Activated CD4-positive, alpha-beta memory T cell treated with anti-CD3 and anti-CD28 coated beads for 36 hours (primary cell): ENCODE measurements at regions of chr11 and their contacts with region 1.

Region 1: DNA sequence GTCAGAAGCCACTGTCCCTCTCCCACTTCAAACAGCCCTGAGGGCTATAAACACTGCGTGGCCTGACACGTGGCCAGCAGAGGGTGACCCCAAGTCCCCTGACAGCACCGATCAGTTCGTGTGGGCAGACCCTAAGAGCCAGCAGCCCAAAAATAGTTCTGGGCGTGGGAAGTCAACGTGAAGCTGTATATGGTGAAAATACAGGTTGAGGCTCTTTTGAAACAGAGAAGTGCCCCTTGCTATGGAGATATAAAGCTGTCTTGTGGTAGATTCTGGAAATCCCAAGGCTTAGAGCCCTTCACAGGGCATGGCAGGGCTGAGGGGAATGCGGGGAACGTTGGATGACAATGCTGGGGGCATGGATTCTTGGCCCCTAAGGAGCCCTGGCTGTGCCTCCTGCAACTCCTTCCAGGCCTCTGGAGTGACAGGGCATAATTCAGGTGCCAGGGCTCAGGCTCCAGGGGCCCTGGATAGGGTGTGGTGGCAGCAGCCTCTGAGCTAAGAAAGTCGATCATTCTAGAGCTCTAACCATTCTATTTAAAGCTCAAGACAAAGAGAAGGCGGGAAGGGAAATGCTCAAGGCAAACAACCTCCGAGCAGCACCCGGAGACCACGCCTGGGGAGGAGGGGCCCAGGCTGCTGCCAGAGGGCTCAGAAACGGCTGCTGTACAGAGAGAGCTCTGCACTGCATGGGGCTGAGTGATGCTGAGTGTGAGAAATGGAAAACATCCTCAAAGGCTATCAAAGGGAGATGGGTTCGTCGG is 60.4 kb upstream of the CD5 start:
- DNase-seq: peak; percentile 92
- H3K4me3 Mint-ChIP-seq: peak overlapping the region; percentile 68
- H3K27ac Mint-ChIP-seq: peak overlapping the region; percentile 96
- H3K4me1 Mint-ChIP-seq: peaks cover 71% of the 10 kb centered on the region
- H3K27me3 Mint-ChIP-seq: no peaks in the 10 kb centered on the region

Region 2: GRCh38 chr11:60970369-60970774 is 71.6 kb before region 1 on chr11:
- CTCF ChIA-PET with region 1: interaction called, 12 read pairs
- POLR2A ChIA-PET with region 1: no interaction called
- intact Hi-C with region 1: loop called (anchors 2 kb)
- DNase-seq: peak; percentile 89
- H3K4me3 Mint-ChIP-seq: peak overlapping the region; percentile 95
- H3K27ac Mint-ChIP-seq: peak overlapping the region; percentile 99
- H3K4me1 Mint-ChIP-seq: peaks cover 15% of the 10 kb centered on the region
- H3K27me3 Mint-ChIP-seq: no peaks in the 10 kb centered on the region

Region 3: DNA sequence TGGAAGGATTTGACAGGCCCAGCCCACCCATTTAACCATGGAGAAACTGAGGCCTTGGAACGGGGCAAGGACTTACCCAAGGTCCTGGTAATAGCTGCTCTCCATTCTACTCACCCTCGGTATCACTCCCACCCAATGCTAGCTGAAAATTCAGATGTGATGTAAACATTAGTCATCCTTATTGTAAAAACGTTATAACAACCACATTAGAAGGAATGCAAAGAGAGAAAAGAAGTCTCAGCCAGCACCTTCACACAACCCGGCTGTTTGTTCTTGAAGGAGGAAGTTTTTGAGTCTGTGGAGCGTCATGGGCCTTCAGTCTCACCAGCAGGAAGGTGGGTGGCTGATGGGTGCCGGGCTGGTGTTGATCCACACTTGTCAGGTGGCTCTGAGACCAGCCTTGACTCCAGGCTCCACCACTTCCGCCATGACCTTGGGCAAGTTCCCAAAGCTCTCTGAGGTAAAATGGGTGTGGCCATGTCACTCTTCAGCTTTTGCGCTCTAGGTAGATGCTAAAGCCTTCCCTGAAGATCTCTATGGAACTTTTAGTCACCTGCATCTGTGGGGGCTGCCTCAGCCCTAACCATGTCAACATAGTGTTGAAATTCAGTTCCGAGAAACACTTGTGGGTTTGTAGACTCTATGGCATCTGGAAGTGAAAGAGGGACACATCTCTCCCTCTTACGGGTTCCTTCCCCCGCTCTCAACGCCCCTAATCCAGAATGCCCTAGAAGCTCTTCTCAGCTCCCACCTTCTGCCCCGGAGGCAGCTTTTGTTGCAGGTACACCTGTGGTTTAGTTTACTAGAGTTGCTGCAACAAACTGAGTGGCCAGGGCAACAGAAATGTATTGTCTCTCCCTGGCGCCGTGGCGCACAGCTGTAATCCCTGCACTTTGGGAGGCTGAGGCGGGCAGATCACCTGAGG is 55.7 kb before region 1 on chr11:
- CTCF ChIA-PET with region 1: interaction called, 4 read pairs
- POLR2A ChIA-PET with region 1: interaction called, 18 read pairs
- intact Hi-C with region 1: loop called (anchors 1 kb)
- DNase-seq: peak; percentile 97
- H3K4me3 Mint-ChIP-seq: peak overlapping the region; percentile 84
- H3K27ac Mint-ChIP-seq: peak overlapping the region; percentile 99
- H3K4me1 Mint-ChIP-seq: peaks cover 91% of the 10 kb centered on the region
- H3K27me3 Mint-ChIP-seq: no peaks in the 10 kb centered on the region

Region 4: GRCh38 chr11:61028272-61028761 is 13.6 kb before region 1 on chr11:
- CTCF ChIA-PET with region 1: interaction called, 6 read pairs
- POLR2A ChIA-PET with region 1: interaction called, 61 read pairs
- intact Hi-C with region 1: loop called (anchors 1 kb)
- DNase-seq: peak; percentile 88
- H3K4me3 Mint-ChIP-seq: peak overlapping the region; percentile 83
- H3K27ac Mint-ChIP-seq: peak overlapping the region; percentile 96
- H3K4me1 Mint-ChIP-seq: peaks cover 77% of the 10 kb centered on the region
- H3K27me3 Mint-ChIP-seq: no peaks in the 10 kb centered on the region

Region 5: GRCh38 chr11:61102667-61103571 is 61.0 kb after region 1 on chr11:
- CTCF ChIA-PET with region 1: no interaction called
- POLR2A ChIA-PET with region 1: interaction called, 10 read pairs
- intact Hi-C with region 1: no loop called
- DNase-seq: peak; percentile 51
- H3K4me3 Mint-ChIP-seq: no peak overlapping the region
- H3K27ac Mint-ChIP-seq: no peak overlapping the region
- H3K4me1 Mint-ChIP-seq: peaks cover 28% of the 10 kb centered on the region
- H3K27me3 Mint-ChIP-seq: no peaks in the 10 kb centered on the region